B cell (primary cell): ENCODE measurements at regions of chrX and their contacts with region 1.

Region 1: GRCh38 chrX:135484641-135485289 is 35.7 kb upstream of the INTS6L start:
- DNase-seq: peak; percentile 52
- ATAC-seq: no peak
- H3K4me3 ChIP-seq: no peak overlapping the region
- H3K4me3 Mint-ChIP-seq: no peak overlapping the region
- H3K27ac ChIP-seq: no peak overlapping the region
- H3K27ac Mint-ChIP-seq: no peak overlapping the region
- H3K4me1 ChIP-seq: peaks cover 0 to 15% of the 10 kb centered on the region in 2 donors
- H3K4me1 Mint-ChIP-seq: peaks cover 9% of the 10 kb centered on the region
- H3K27me3 ChIP-seq: no peaks in the 10 kb centered on the region
- H3K27me3 Mint-ChIP-seq: no peaks in the 10 kb centered on the region
- CTCF ChIP-seq: peak; percentile 66

Region 2: DNA sequence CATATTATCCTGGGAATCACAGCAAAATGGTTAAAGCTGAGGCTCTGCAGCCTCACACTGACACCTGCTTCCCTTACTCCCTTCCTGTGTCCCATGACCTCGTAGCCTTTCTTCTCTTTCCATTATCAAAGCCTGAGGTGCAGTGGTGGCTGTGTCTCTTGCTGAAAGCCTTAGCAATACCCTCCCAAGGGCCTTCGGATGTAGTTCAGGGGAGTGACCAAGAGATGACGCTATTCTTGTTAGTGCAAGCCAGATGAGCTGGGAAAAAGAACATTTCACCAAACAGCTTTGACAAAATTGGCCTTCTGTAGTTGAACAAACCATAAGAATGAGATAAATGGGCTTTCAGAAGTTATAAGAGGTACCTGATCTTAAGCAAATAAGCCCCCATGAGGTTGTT is 31.4 kb before region 1 on chrX:
- CTCF ChIA-PET with region 1: no interaction called
- POLR2A ChIA-PET with region 1: no interaction called
- intact Hi-C with region 1: no loop called
- DNase-seq: no peak
- ATAC-seq: no peak
- H3K4me3 ChIP-seq: no peak overlapping the region
- H3K4me3 Mint-ChIP-seq: no peak overlapping the region
- H3K27ac ChIP-seq: no peak overlapping the region
- H3K27ac Mint-ChIP-seq: no peak overlapping the region
- H3K4me1 ChIP-seq: no peaks in the 10 kb centered on the region
- H3K4me1 Mint-ChIP-seq: no peaks in the 10 kb centered on the region
- H3K27me3 ChIP-seq: no peaks in the 10 kb centered on the region
- H3K27me3 Mint-ChIP-seq: peaks cover 5% of the 10 kb centered on the region
- CTCF ChIP-seq: no peak

Region 3: GRCh38 chrX:135543924-135544323 is 59.2 kb after region 1 on chrX:
- CTCF ChIA-PET with region 1: interaction called, 4 read pairs
- POLR2A ChIA-PET with region 1: no interaction called
- intact Hi-C with region 1: loop called (anchors 2 kb)
- DNase-seq: peak; percentile 58
- ATAC-seq: peak; percentile 51
- H3K4me3 ChIP-seq: peak overlapping the region in 1 of 5 experiments; percentile 13
- H3K4me3 Mint-ChIP-seq: peak overlapping the region; percentile 80
- H3K27ac ChIP-seq: peak overlapping the region; percentile 32 to 60
- H3K27ac Mint-ChIP-seq: peak overlapping the region; percentile 88
- H3K4me1 ChIP-seq: peaks cover 20 to 29% of the 10 kb centered on the region in 2 donors
- H3K4me1 Mint-ChIP-seq: peaks cover 34% of the 10 kb centered on the region
- H3K27me3 ChIP-seq: no peaks in the 10 kb centered on the region
- H3K27me3 Mint-ChIP-seq: no peaks in the 10 kb centered on the region
- CTCF ChIP-seq: peak; percentile 67

Region 4: GRCh38 chrX:135572436-135572835 is 87.7 kb after region 1 on chrX:
- CTCF ChIA-PET with region 1: interaction called, 10 read pairs
- POLR2A ChIA-PET with region 1: no interaction called
- intact Hi-C with region 1: loop called (anchors 1 kb)
- DNase-seq: peak; percentile 3
- ATAC-seq: no peak
- H3K4me3 ChIP-seq: no peak overlapping the region
- H3K4me3 Mint-ChIP-seq: no peak overlapping the region
- H3K27ac ChIP-seq: no peak overlapping the region
- H3K27ac Mint-ChIP-seq: no peak overlapping the region
- H3K4me1 ChIP-seq: no peaks in the 10 kb centered on the region
- H3K4me1 Mint-ChIP-seq: no peaks in the 10 kb centered on the region
- H3K27me3 ChIP-seq: no peaks in the 10 kb centered on the region
- H3K27me3 Mint-ChIP-seq: no peaks in the 10 kb centered on the region
- CTCF ChIP-seq: peak; percentile 51

Region 5: DNA sequence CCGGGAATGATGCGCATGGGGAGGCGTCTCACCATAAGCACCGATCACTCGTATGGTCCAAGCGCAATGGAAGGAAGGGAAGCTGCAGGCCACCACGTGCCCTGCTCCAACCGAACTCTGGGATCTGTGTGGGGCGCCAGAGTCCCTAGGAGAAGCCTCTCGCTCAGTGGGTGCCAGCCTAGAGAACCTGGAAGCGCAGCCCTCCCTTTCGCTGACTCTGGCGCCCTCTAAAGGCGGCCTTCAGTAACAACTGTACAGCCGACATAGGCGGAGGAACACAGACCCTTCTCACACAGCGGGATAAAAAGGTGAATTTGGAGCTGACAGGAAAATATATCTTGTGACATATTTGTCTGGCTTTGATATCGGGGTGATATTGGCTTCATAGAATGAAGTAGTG is 111.7 kb after region 1 on chrX:
- CTCF ChIA-PET with region 1: interaction called, 4 read pairs
- POLR2A ChIA-PET with region 1: no interaction called
- intact Hi-C with region 1: loop called (anchors 1 kb)
- DNase-seq: peak; percentile 42
- ATAC-seq: no peak
- H3K4me3 ChIP-seq: no peak overlapping the region
- H3K4me3 Mint-ChIP-seq: no peak overlapping the region
- H3K27ac ChIP-seq: no peak overlapping the region
- H3K27ac Mint-ChIP-seq: no peak overlapping the region
- H3K4me1 ChIP-seq: no peaks in the 10 kb centered on the region
- H3K4me1 Mint-ChIP-seq: no peaks in the 10 kb centered on the region
- H3K27me3 ChIP-seq: no peaks in the 10 kb centered on the region
- H3K27me3 Mint-ChIP-seq: peaks cover 9% of the 10 kb centered on the region
- CTCF ChIP-seq: peak; percentile 54

Region 6: GRCh38 chrX:135697601-135698000 is 212.8 kb after region 1 on chrX:
- CTCF ChIA-PET with region 1: interaction called, 4 read pairs
- POLR2A ChIA-PET with region 1: no interaction called
- intact Hi-C with region 1: loop called (anchors 2 kb)
- DNase-seq: no peak
- ATAC-seq: no peak
- H3K4me3 ChIP-seq: no peak overlapping the region
- H3K4me3 Mint-ChIP-seq: no peak overlapping the region
- H3K27ac ChIP-seq: no peak overlapping the region
- H3K27ac Mint-ChIP-seq: no peak overlapping the region
- H3K4me1 ChIP-seq: no peaks in the 10 kb centered on the region
- H3K4me1 Mint-ChIP-seq: no peaks in the 10 kb centered on the region
- H3K27me3 ChIP-seq: no peaks in the 10 kb centered on the region
- H3K27me3 Mint-ChIP-seq: peaks cover 3% of the 10 kb centered on the region
- CTCF ChIP-seq: no peak

Region 7: DNA sequence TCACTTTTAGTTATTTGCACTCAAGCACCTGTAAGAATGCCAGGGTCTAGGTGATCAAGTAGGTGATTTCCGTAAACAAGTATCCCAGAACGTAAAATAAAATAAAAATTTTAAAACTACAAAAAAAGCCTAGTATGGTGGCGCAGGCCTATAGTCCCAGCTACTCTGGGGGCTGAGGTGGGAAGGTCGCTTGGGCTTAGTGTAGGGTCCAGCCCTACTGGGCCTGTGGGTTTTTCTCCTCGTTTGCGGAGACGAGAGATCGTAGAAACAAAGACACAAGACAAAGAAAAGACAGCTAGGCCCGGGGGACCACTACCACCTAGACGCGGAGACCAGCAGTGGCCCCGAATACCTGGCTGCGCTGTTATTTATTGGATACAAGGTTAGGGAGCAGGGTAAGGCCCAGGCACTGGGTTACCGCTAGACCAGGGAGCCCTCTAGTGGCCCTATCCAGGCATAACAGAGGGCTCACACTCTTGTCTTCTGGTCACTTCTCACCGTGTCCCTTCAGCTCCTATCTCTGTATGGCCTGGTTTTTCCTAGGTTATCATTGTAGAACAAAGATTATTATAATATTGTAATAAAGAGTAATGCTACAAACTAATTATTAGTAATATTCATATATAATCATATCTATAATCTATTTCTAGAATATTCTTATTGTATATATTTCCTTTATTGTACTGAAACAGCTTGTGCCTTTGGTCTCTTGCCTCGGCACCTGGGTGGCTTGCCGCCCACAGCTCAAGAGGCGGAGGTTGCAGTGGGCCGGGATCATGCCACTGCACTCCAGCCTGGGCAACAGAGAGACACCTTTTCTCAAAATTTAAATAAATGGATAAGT is 447.1 kb after region 1 on chrX:
- CTCF ChIA-PET with region 1: interaction called, 11 read pairs
- POLR2A ChIA-PET with region 1: no interaction called
- intact Hi-C with region 1: loop called (anchors 1 kb)
- DNase-seq: peak; percentile 38
- ATAC-seq: peak; percentile 36
- H3K4me3 ChIP-seq: no peak overlapping the region
- H3K4me3 Mint-ChIP-seq: no peak overlapping the region
- H3K27ac ChIP-seq: no peak overlapping the region
- H3K27ac Mint-ChIP-seq: no peak overlapping the region
- H3K4me1 ChIP-seq: no peaks in the 10 kb centered on the region
- H3K4me1 Mint-ChIP-seq: no peaks in the 10 kb centered on the region
- H3K27me3 ChIP-seq: no peaks in the 10 kb centered on the region
- H3K27me3 Mint-ChIP-seq: no peaks in the 10 kb centered on the region
- CTCF ChIP-seq: peak; percentile 74